AG04450 (cell line): ENCODE measurements at regions of chr13 and their contacts with region 1.

Region 1: GRCh38 chr13:95191821-95192563 is 109.3 kb downstream of the ABCC4 start:
- DNase-seq: peak; percentile 57
- H3K4me3 ChIP-seq: no peak overlapping the region
- H3K27ac ChIP-seq: no peak overlapping the region
- H3K27me3 ChIP-seq: no peaks in the 10 kb centered on the region
- CTCF ChIP-seq: peak; percentile 97

Region 2: GRCh38 chr13:94400874-94401273 is 791.1 kb before region 1 on chr13:
- CTCF ChIA-PET with region 1: no interaction called
- POLR2A ChIA-PET with region 1: no interaction called
- DNase-seq: no peak
- H3K4me3 ChIP-seq: no peak overlapping the region
- H3K27ac ChIP-seq: no peak overlapping the region
- H3K27me3 ChIP-seq: no peaks in the 10 kb centered on the region
- CTCF ChIP-seq: no peak

Region 3: GRCh38 chr13:94956417-94957110 is 235.4 kb before region 1 on chr13:
- CTCF ChIA-PET with region 1: no interaction called
- POLR2A ChIA-PET with region 1: no interaction called
- DNase-seq: no peak
- H3K4me3 ChIP-seq: no peak overlapping the region
- H3K27ac ChIP-seq: no peak overlapping the region
- H3K27me3 ChIP-seq: peaks cover 14% of the 10 kb centered on the region
- CTCF ChIP-seq: no peak

Region 4: DNA sequence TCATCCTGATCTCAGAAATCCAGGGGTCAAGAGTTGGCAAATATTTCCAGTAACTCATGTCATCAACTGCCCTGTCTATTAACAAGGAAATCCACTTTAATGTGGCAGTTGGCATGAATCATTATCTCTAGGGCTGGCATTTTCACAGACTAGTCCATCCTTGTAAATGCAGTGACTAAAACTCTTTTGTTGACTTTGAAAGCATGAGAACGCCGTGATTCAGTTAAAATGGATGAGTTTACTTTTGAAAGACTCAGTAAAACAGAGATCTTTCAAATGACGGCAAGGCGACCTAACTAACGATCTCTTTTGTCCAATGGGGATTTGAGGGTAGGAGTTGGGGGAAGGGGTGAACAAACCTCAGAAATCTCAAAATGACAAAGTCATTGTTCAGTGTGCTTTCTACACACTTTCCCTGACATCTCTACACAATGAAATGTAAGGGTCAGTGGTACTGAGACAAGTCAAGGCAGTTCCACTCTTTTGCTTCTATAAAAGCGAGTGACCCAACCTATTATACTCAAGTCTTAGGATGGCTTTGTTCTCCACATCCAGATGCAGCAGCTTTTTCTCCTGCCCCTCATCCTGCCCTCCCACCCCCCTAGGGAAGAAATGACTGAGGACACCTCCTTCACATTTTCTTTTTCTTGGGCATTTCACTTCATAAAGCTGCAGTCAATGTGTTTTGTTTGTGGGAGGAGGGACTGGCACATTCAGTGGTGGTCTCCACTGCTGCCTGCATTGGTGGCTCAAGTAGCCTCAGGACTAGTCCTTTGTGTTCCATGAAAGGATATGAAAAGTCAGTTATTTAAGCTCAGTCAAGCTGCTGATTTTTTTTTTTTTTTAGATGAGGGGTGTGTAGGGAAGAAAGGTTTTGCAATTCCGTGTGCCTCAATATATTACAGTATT is 91.2 kb before region 1 on chr13:
- CTCF ChIA-PET with region 1: no interaction called
- POLR2A ChIA-PET with region 1: no interaction called
- DNase-seq: no peak
- H3K4me3 ChIP-seq: no peak overlapping the region
- H3K27ac ChIP-seq: peak overlapping the region; percentile 55
- H3K27me3 ChIP-seq: no peaks in the 10 kb centered on the region
- CTCF ChIP-seq: no peak

Region 5: GRCh38 chr13:95201814-95202651 is 10.0 kb after region 1 on chr13:
- CTCF ChIA-PET with region 1: interaction called, 11 read pairs
- POLR2A ChIA-PET with region 1: interaction called, 4 read pairs
- DNase-seq: no peak
- H3K4me3 ChIP-seq: no peak overlapping the region
- H3K27ac ChIP-seq: no peak overlapping the region
- H3K27me3 ChIP-seq: no peaks in the 10 kb centered on the region
- CTCF ChIP-seq: no peak

Region 6: GRCh38 chr13:95275322-95276036 is 83.5 kb after region 1 on chr13:
- CTCF ChIA-PET with region 1: interaction called, 23 read pairs
- POLR2A ChIA-PET with region 1: interaction called, 10 read pairs
- DNase-seq: no peak
- H3K4me3 ChIP-seq: no peak overlapping the region
- H3K27ac ChIP-seq: peak overlapping the region; percentile 77
- H3K27me3 ChIP-seq: no peaks in the 10 kb centered on the region
- CTCF ChIP-seq: no peak

Region 7: GRCh38 chr13:95337597-95337996 is 145.6 kb after region 1 on chr13:
- CTCF ChIA-PET with region 1: interaction called, 10 read pairs
- POLR2A ChIA-PET with region 1: no interaction called
- DNase-seq: no peak
- H3K4me3 ChIP-seq: no peak overlapping the region
- H3K27ac ChIP-seq: no peak overlapping the region
- H3K27me3 ChIP-seq: no peaks in the 10 kb centered on the region
- CTCF ChIP-seq: no peak

Region 8: GRCh38 chr13:95387733-95388207 is 195.8 kb after region 1 on chr13:
- CTCF ChIA-PET with region 1: interaction called, 535 read pairs
- POLR2A ChIA-PET with region 1: no interaction called
- DNase-seq: no peak
- H3K4me3 ChIP-seq: no peak overlapping the region
- H3K27ac ChIP-seq: no peak overlapping the region
- H3K27me3 ChIP-seq: peaks cover 9% of the 10 kb centered on the region
- CTCF ChIP-seq: no peak